GM13977 (cell line): ENCODE measurements at regions of chr4 and their contacts with region 1.

Region 1: DNA sequence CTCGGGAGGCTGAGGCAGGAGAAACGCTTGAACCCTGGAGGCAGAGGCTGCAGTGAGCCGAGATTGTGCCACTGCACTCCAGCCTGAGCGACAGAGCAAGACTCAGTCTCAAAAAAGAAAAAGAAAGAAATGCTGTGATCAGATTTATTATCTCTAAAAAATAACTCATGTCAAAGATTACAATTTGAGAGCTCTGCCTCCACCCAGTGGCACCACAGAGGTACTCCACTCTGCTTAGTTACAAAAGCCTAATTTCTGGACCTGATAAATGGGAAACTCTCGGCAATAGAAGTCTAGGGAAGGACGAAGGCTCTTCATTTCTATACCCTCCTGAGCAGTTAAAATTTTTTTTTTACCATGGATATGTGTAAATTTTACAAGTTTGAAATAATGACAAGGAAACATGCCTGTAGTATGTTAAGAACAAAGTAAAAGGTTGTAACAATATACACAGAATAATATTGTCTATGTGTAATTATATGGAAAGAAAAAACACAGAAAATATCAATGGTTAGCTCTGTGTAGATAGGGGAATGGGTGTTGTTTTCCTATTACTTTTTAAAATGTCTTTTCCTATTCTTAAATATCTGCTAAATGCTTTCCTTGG is 149.8 kb downstream of the STIM2 start:
- DNase-seq: peak; percentile 32
- CTCF ChIP-seq: peak; percentile 91

Region 2: DNA sequence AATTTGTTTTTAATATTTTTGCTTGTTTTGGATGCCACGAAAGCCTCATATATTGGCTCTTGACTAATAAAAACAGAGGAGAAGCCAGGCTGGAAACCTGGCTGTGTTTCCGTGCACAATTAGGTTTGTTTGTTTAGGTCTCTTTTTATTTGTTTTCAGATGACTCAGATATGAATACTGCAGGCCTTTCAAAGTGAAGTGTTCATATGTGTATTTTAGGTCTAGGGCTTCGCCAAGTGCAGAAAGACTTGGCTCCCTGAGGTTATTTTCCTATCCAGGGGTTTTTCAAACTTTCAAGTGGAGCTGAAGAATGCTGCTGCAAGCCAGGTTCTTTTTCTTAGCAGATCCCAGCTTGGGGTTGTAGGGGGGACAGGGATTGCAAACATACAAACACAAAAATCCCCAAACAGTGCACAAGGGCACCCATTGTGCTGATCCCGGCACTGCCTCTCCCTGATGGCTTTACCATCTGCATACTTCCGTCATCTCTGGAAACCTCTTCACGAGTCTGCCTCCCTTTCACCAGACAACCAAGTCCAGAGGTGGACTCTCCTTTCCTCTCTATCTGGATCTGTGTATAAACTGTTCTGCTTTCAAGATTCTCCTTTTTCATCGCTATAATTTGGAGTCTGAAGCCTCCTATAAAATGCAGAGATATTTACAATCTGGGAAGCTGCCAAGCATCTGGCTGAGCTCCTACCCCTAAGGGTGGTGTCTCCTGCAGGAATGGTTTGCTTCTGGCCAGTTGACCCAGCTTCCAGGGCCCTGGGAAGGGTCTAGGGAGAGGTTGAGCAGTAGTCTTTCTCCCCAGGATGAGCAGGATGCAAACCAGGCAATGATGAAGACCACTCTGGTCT is 987.9 kb before region 1 on chr4:
- in situ Hi-C with region 1: loop called (anchors 25 kb)
- DNase-seq: no peak
- CTCF ChIP-seq: no peak

Region 3: GRCh38 chr4:26459054-26459755 is 551.2 kb before region 1 on chr4:
- in situ Hi-C with region 1: loop called (anchors 10 kb)
- DNase-seq: peak; percentile 63
- CTCF ChIP-seq: peak; percentile 63

Region 4: GRCh38 chr4:27066601-27067000 is 56.2 kb after region 1 on chr4:
- in situ Hi-C with region 1: no loop called
- DNase-seq: no peak
- CTCF ChIP-seq: no peak